ENCODE measurements at regions of chr1 and their contacts with region 1.

Region 1: GRCh38 chr1:201551877-201552731 is 13.2 kb downstream of the NAV1 start:
- DNase-seq: no peak
- H3K4me3 ChIP-seq: no peak overlapping the region
- H3K27ac ChIP-seq: peak overlapping the region; percentile 84
- H3K27me3 ChIP-seq: no peaks in the 10 kb centered on the region
- CTCF ChIP-seq: no peak

Region 2: DNA sequence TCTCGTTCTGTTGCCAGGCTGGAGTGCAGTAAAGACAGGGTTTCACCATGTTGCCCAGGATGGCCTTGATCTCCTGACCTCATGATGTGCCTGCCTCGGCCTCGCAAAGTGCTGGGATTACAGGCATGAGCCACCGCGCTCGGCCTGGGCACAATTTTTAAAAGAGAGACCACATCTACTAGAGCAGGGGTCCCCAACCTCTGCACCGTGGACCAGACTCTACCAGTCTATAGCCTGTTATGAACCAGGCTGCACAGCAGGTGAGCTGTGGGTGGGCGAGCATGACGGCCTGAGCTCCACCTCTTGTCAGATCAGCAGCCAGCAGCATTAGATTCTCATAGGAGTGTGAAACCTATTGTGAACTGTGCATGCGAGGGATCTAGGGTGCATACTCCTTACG is 195.4 kb before region 1 on chr1:
- CTCF ChIA-PET with region 1: interaction called, 13 read pairs
- POLR2A ChIA-PET with region 1: no interaction called
- DNase-seq: no peak
- H3K4me3 ChIP-seq: no peak overlapping the region
- H3K27ac ChIP-seq: no peak overlapping the region
- H3K27me3 ChIP-seq: peaks cover 40% of the 10 kb centered on the region
- CTCF ChIP-seq: no peak